Activated T-helper 2 cell treated with anti-CD3 and anti-CD28 coated beads, Interferon-gamma antibody, Interleukin-2, Interleukin-4, amounts not matched to agents 10 μg/mL and 5 μg/mL and 100 μg/mL, durations not matched to agents 14 hours and 24 hours and 36 hours (primary cell): ENCODE measurements at regions of chr14 and their contacts with region 1.

Region 1: DNA sequence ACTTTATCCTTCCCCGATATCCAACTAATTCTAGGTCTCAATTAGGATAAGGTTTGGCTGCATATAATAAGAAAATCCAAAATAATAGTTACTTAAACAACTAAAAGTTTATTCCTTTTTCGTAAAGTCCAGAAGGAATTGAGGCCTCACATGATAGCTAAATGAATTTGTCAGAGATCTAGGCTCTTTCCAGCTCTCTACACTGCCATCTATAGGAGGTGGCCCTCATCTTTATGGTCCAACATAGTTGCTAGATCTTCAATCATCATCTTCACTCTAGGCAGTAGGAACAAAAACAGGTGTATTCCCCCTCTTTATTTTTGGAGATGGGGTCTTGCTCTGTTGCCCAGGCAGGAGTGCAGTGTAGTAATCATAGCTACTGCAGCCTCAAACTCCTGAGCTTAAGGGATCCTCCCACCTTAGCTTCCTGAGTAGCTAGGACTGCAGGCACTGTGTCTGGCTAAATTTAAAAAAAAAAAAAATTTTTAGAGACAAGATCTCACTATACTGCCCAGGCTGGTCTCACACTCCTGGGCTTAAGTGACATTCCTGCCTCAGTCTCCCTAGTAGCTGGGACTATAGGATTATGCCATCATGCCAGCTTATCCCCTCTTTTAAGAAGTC is 46.5 kb upstream of the SAV1 start:
- DNase-seq: no peak
- H3K4me3 Mint-ChIP-seq: no peak overlapping the region
- H3K27ac Mint-ChIP-seq: no peak overlapping the region
- H3K4me1 Mint-ChIP-seq: no peaks in the 10 kb centered on the region
- H3K27me3 Mint-ChIP-seq: no peaks in the 10 kb centered on the region

Region 2: GRCh38 chr14:50542941-50543418 is 171.6 kb before region 1 on chr14:
- intact Hi-C with region 1: loop called (anchors 5 kb)
- DNase-seq: no peak
- H3K4me3 Mint-ChIP-seq: no peak overlapping the region
- H3K27ac Mint-ChIP-seq: no peak overlapping the region
- H3K4me1 Mint-ChIP-seq: peaks cover 12% of the 10 kb centered on the region
- H3K27me3 Mint-ChIP-seq: peaks cover 11% of the 10 kb centered on the region